Activated CD4-positive, alpha-beta memory T cell treated with anti-CD3 and anti-CD28 coated beads for 36 hours (primary cell): ENCODE measurements at regions of chr12 and their contacts with region 1.

Region 1: GRCh38 chr12:94372461-94372860 is 87.2 kb downstream of the CEP83 start:
- DNase-seq: no peak
- H3K4me3 Mint-ChIP-seq: no peak overlapping the region
- H3K27ac Mint-ChIP-seq: peak overlapping the region; percentile 80
- H3K4me1 Mint-ChIP-seq: peaks cover 40% of the 10 kb centered on the region
- H3K27me3 Mint-ChIP-seq: no peaks in the 10 kb centered on the region

Region 2: GRCh38 chr12:94262228-94263010 is 110.0 kb before region 1 on chr12:
- CTCF ChIA-PET with region 1: no interaction called
- POLR2A ChIA-PET with region 1: no interaction called
- intact Hi-C with region 1: loop called (anchors 2 kb)
- DNase-seq: peak; percentile 85
- H3K4me3 Mint-ChIP-seq: peak overlapping the region; percentile 88
- H3K27ac Mint-ChIP-seq: peak overlapping the region; percentile 98
- H3K4me1 Mint-ChIP-seq: peaks cover 37% of the 10 kb centered on the region
- H3K27me3 Mint-ChIP-seq: no peaks in the 10 kb centered on the region

Region 3: DNA sequence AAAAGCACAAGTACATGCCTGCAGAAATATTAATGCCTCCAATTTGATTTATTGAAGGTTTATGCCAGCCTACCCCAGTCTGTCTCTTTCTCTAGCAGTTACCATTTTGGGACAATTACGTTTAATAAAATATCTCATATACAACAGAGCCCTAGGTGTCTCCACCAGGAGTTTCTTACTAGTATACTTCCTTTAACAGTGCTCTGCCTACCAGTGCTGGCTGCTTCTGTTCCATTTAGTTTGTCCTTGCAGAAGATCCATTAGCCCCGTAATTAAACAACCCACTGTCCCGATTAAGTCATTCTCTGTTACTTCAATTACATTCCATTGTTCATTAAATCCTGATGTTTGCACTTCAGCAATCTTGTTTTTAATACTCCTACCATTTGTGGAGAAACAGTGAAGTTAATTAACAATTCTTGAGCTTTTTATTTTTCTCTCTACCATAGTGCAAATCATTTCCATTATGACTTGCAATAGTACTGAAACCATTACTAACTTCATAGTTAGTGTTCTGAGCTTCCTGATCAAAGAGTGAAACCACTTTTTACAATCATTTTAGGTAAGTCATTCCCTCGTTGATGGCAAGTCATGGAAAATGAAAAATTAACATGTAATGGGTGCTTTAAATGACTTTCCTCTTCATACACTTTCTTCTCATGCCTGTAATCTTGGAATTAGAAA is 103.0 kb before region 1 on chr12:
- CTCF ChIA-PET with region 1: no interaction called
- POLR2A ChIA-PET with region 1: no interaction called
- intact Hi-C with region 1: loop called (anchors 1 kb)
- DNase-seq: no peak
- H3K4me3 Mint-ChIP-seq: no peak overlapping the region
- H3K27ac Mint-ChIP-seq: no peak overlapping the region
- H3K4me1 Mint-ChIP-seq: peaks cover 49% of the 10 kb centered on the region
- H3K27me3 Mint-ChIP-seq: no peaks in the 10 kb centered on the region

Region 4: GRCh38 chr12:94326727-94327126 is 45.7 kb before region 1 on chr12:
- CTCF ChIA-PET with region 1: no interaction called
- POLR2A ChIA-PET with region 1: no interaction called
- intact Hi-C with region 1: loop called (anchors 1 kb)
- DNase-seq: peak; percentile 20
- H3K4me3 Mint-ChIP-seq: no peak overlapping the region
- H3K27ac Mint-ChIP-seq: peak overlapping the region; percentile 8
- H3K4me1 Mint-ChIP-seq: peaks cover 24% of the 10 kb centered on the region
- H3K27me3 Mint-ChIP-seq: no peaks in the 10 kb centered on the region

Region 5: GRCh38 chr12:94353130-94353529 is 19.3 kb before region 1 on chr12:
- CTCF ChIA-PET with region 1: no interaction called
- POLR2A ChIA-PET with region 1: no interaction called
- intact Hi-C with region 1: no loop called
- DNase-seq: no peak
- H3K4me3 Mint-ChIP-seq: no peak overlapping the region
- H3K27ac Mint-ChIP-seq: no peak overlapping the region
- H3K4me1 Mint-ChIP-seq: peaks cover 6% of the 10 kb centered on the region
- H3K27me3 Mint-ChIP-seq: no peaks in the 10 kb centered on the region

Region 6: GRCh38 chr12:94427501-94428381 is 55.3 kb after region 1 on chr12:
- CTCF ChIA-PET with region 1: no interaction called
- POLR2A ChIA-PET with region 1: no interaction called
- intact Hi-C with region 1: loop called (anchors 5 kb)
- DNase-seq: peak; percentile 16
- H3K4me3 Mint-ChIP-seq: no peak overlapping the region
- H3K27ac Mint-ChIP-seq: peak overlapping the region; percentile 54
- H3K4me1 Mint-ChIP-seq: peaks cover 29% of the 10 kb centered on the region
- H3K27me3 Mint-ChIP-seq: no peaks in the 10 kb centered on the region

Region 7: DNA sequence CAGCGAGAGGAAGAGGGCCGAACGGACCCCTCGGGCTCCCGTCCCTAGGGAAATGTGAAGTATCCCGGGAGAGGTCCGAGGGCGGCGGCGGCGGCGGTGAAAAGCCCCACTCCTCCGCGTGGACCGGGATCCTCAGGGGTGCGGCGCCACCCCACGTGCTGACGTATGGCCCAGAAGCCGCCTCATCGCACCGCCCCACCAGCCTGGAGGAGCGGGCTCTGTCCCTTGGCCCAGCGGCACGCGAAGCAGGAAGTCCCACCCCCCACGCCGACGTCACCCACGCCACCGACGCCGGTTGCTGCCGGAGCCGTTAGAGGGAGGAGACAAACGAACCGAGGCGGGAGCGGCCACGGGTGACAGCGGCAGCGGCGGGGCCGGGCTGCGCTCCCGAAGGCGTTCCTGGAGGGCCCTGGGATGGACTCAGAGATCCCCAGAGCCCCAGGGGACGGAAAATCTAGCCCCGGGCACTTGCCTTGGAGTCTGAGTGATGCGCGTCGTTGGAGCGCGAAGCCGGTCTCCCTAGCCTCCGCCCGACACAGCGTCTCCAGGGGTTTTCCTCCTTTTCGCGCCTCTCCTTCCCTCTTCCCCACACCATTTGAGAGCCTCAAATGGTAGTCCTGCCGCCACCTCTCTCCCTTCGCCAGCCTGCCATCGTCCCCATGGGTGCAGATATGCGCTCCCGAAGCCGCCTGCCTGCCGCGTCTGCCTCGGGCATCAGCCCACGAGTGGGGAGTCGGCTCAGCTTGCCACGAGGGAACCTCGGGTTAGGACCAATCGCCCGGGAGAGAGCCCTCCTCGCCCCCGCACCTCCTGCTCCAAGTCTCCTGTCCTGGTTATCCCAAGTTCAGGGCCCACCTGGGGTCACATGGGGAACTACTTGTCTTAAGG is 87.5 kb after region 1 on chr12 and contains the start of gene CEP83:
- CTCF ChIA-PET with region 1: no interaction called
- POLR2A ChIA-PET with region 1: interaction called, 3 read pairs
- intact Hi-C with region 1: loop called (anchors 1 kb)
- DNase-seq: peak; percentile 98
- H3K4me3 Mint-ChIP-seq: peak within 1 kb of the TSS; percentile 82
- H3K27ac Mint-ChIP-seq: peak within 1 kb of the TSS; percentile 92
- H3K4me1 Mint-ChIP-seq: peaks cover 31% of the 10 kb centered on the region
- H3K27me3 Mint-ChIP-seq: peaks cover 7% of the 10 kb centered on the region
- total RNA-seq, gene CEP83: 23.4 TPM

Region 8: DNA sequence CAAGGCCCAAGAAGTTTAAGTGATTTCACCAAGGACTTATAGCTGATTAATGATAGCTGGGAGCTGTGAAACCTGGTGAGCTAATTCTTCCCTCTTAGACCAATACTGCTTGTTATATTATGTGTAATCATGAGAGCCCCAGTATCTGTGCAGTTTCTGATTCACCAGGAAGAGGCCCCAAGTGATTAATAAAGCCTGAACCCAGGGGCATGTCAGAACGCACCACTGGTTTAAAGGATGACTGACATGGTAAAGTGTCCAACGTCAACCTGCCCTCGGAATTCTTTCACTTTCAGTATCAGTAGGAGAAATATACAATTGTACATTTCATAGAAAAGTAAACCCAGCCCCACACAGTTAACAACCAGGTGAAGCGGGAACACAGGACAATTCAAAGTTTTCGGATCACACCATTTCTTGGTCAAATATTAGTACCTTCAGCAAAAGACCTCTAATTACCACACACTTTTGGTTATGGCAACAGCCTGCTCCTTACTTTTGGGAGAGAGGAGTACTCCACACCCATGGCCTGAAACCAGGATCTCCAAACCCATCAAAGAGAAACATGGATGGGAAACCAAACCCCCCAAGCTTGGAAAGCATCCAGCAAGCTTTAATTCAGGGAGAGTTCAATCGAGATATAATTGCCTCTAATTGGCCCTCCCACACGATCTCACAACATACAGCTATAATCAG is 249.4 kb after region 1 on chr12:
- CTCF ChIA-PET with region 1: no interaction called
- POLR2A ChIA-PET with region 1: no interaction called
- intact Hi-C with region 1: loop called (anchors 1 kb)
- DNase-seq: peak; percentile 67
- H3K4me3 Mint-ChIP-seq: peak overlapping the region; percentile 23
- H3K27ac Mint-ChIP-seq: peak overlapping the region; percentile 56
- H3K4me1 Mint-ChIP-seq: peaks cover 22% of the 10 kb centered on the region
- H3K27me3 Mint-ChIP-seq: no peaks in the 10 kb centered on the region